CD14-positive monocyte (primary cell): ENCODE measurements at regions of chr3 and their contacts with region 1.

Region 1: DNA sequence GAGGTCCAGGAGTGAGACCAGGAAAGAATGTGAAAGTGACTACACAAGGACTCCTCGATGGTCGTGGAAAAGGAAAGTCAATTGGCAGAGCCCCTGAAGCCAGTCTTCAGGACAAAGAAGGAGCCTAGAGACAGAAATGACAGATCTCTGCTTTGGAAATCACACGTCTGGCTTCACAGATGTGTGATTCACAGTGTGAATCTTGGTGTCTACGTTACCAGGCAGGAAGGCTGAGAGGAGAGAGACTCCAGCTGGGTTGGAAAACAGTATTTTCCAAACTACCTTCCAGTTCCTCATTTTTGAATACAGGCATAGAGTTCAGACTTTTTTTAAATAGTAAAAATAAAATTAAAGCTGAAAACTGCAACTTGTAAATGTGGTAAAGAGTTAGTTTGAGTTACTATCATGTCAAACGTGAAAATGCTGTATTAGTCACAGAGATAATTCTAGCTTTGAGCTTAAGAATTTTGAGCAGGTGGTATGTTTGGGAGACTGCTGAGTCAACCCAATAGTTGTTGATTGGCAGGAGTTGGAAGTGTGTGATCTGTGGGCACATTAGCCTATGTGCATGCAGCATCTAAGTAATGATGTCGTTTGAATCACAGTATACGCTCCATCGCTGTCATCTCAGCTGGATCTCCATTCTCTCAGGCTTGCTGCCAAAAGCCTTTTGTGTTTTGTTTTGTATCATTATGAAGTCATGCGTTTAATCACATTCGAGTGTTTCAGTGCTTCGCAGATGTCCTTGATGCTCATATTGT is 6.0 kb downstream of the CCR2 start:
- DNase-seq: peak in 2 of 3 donors; percentile 59 to 62
- H3K4me3 ChIP-seq: peak overlapping the region; percentile 5 to 92 (median 26)
- H3K4me3 Mint-ChIP-seq: peak overlapping the region; percentile 60 to 84
- H3K27ac ChIP-seq: peak overlapping the region; percentile 40 to 88
- H3K27ac Mint-ChIP-seq: peak overlapping the region; percentile 90 to 96 (median 92)
- H3K4me1 ChIP-seq: peaks cover 69 to 85% of the 10 kb centered on the region in 2 donors
- H3K4me1 Mint-ChIP-seq: peaks cover 89% of the 10 kb centered on the region
- H3K27me3 ChIP-seq: no peaks in the 10 kb centered on the region
- H3K27me3 Mint-ChIP-seq: no peaks in the 10 kb centered on the region
- CTCF ChIP-seq: no peak

Region 2: DNA sequence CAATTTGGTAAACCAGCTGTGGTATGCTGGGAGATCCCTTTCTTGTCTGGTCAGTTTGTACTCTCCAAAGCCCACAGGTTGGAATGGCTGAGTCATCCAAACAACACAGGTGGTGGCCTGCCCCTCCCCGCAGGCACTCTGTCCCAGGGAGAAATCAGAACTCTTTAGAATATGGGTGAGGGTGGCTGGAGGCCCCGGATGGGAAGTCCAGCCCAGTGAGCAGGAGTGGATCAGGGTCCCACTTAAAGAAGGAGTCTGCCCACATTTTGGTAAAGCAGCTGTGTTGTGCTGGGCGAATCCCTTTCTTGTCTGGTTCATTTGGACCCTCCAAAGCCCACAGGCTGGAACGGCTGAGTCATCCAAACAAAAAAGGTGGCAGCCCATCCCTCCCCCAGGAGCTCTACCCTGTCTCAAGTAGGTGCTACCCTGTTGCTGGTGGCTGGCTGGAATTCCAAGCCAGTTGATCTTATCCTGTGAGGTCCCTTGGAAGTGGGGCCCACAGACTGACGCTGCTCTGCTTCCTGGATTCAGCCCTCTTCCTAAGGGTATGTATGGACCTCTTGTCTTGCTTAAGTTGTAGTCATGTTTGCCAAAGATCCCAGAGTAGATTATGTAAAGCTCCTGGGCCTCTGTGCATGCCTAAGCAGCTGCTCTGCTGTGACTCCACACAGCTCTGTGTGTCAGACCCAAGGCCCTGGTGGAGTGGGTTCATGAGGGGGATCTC is 196.4 kb before region 1 on chr3:
- intact Hi-C with region 1: no loop called
- DNase-seq: no peak
- H3K4me3 ChIP-seq: no peak overlapping the region
- H3K4me3 Mint-ChIP-seq: no peak overlapping the region
- H3K27ac ChIP-seq: no peak overlapping the region
- H3K27ac Mint-ChIP-seq: peak overlapping the region in 2 of 7 donors; percentile 32 to 87
- H3K4me1 ChIP-seq: peaks cover 12 to 13% of the 10 kb centered on the region in 2 donors
- H3K4me1 Mint-ChIP-seq: peaks cover 16% of the 10 kb centered on the region
- H3K27me3 ChIP-seq: no peaks in the 10 kb centered on the region
- H3K27me3 Mint-ChIP-seq: no peaks in the 10 kb centered on the region
- CTCF ChIP-seq: no peak

Region 3: GRCh38 chr3:46222435-46223161 is 137.3 kb before region 1 on chr3:
- intact Hi-C with region 1: loop called in 1 of 2 experiments (anchors 5 kb)
- DNase-seq: peak; percentile 91 to 96 (median 95)
- H3K4me3 ChIP-seq: peak overlapping the region in 1 of 3 experiments; percentile 28
- H3K4me3 Mint-ChIP-seq: peak overlapping the region; percentile 50 to 79
- H3K27ac ChIP-seq: peak overlapping the region; percentile 92 to 95
- H3K27ac Mint-ChIP-seq: peak overlapping the region; percentile 91 to 98 (median 97)
- H3K4me1 ChIP-seq: peaks cover 39 to 41% of the 10 kb centered on the region in 2 donors
- H3K4me1 Mint-ChIP-seq: peaks cover 37% of the 10 kb centered on the region
- H3K27me3 ChIP-seq: no peaks in the 10 kb centered on the region
- H3K27me3 Mint-ChIP-seq: peaks cover 0 to 3% (median 0%) of the 10 kb centered on the region in 3 donors
- CTCF ChIP-seq: no peak

Region 4: DNA sequence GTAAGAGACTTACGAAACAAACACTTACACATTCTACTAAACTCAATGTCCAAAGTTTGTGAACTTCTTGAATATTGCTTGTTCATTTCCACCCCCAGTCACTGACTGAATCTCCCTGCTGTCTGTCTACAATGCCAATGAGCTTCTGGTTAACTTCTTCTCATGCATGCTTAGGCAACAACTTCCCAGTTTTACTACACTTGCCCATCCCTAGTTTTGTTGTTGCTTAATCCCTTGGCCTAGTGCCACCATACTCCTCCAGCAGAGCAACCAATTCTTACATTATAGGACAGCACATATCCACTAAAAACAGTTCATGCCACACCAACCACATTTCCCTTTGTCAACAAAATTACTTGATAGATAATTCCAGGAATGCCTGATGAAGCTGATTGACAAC is 46.9 kb before region 1 on chr3:
- intact Hi-C with region 1: loop called in 1 of 2 experiments (anchors 5 kb)
- DNase-seq: peak; percentile 89 to 99 (median 97)
- H3K4me3 ChIP-seq: peak overlapping the region in 1 of 3 experiments; percentile 35
- H3K4me3 Mint-ChIP-seq: peak overlapping the region in 1 of 2 donors; percentile 56
- H3K27ac ChIP-seq: peak overlapping the region in 1 of 2 donors; percentile 93
- H3K27ac Mint-ChIP-seq: peak overlapping the region; percentile 81 to 94 (median 88)
- H3K4me1 ChIP-seq: peaks cover 72 to 88% of the 10 kb centered on the region in 2 donors
- H3K4me1 Mint-ChIP-seq: peaks cover 78% of the 10 kb centered on the region
- H3K27me3 ChIP-seq: no peaks in the 10 kb centered on the region
- H3K27me3 Mint-ChIP-seq: no peaks in the 10 kb centered on the region
- CTCF ChIP-seq: no peak

Region 5: GRCh38 chr3:46321461-46322104 is 38.3 kb before region 1 on chr3:
- intact Hi-C with region 1: loop called in 1 of 2 experiments (anchors 5 kb)
- DNase-seq: peak in 2 of 3 donors; percentile 56 to 74
- H3K4me3 ChIP-seq: peak overlapping the region in 1 of 3 experiments; percentile 59
- H3K4me3 Mint-ChIP-seq: peak overlapping the region in 1 of 2 donors; percentile 59
- H3K27ac ChIP-seq: peak overlapping the region; percentile 81 to 87
- H3K27ac Mint-ChIP-seq: peak overlapping the region; percentile 85 to 94 (median 90)
- H3K4me1 ChIP-seq: peaks cover 82 to 91% of the 10 kb centered on the region in 2 donors
- H3K4me1 Mint-ChIP-seq: peaks cover 80% of the 10 kb centered on the region
- H3K27me3 ChIP-seq: no peaks in the 10 kb centered on the region
- H3K27me3 Mint-ChIP-seq: peaks cover 0 to 3% (median 0%) of the 10 kb centered on the region in 3 donors
- CTCF ChIP-seq: no peak

Region 6: DNA sequence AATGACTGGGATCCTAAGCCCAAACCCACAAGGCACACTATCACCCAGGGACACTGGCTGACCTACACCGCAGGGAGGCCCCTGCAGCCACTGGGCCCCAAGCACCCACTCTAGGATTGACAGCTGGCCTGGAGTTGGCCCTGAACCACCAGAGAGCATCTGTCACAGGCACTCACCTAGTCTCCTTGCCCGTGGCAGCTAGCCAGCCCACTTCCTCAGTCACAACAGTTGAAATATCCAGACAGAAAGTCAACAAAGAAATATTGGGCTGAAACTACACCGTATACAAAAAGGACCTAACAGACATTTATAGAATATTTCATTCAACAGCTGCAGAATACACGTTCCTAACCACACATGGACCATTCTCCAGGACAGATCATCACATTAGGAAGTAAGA is 1978.7 kb after region 1 on chr3:
- intact Hi-C with region 1: no loop called
- DNase-seq: no peak
- H3K4me3 ChIP-seq: no peak overlapping the region
- H3K4me3 Mint-ChIP-seq: no peak overlapping the region
- H3K27ac ChIP-seq: no peak overlapping the region
- H3K27ac Mint-ChIP-seq: no peak overlapping the region
- H3K4me1 ChIP-seq: peaks cover 26 to 37% of the 10 kb centered on the region in 2 donors
- H3K4me1 Mint-ChIP-seq: peaks cover 57% of the 10 kb centered on the region
- H3K27me3 ChIP-seq: no peaks in the 10 kb centered on the region
- H3K27me3 Mint-ChIP-seq: no peaks in the 10 kb centered on the region
- CTCF ChIP-seq: no peak